PC-9 (cell line): ENCODE measurements at regions of chr16 and their contacts with region 1.

Region 1: DNA sequence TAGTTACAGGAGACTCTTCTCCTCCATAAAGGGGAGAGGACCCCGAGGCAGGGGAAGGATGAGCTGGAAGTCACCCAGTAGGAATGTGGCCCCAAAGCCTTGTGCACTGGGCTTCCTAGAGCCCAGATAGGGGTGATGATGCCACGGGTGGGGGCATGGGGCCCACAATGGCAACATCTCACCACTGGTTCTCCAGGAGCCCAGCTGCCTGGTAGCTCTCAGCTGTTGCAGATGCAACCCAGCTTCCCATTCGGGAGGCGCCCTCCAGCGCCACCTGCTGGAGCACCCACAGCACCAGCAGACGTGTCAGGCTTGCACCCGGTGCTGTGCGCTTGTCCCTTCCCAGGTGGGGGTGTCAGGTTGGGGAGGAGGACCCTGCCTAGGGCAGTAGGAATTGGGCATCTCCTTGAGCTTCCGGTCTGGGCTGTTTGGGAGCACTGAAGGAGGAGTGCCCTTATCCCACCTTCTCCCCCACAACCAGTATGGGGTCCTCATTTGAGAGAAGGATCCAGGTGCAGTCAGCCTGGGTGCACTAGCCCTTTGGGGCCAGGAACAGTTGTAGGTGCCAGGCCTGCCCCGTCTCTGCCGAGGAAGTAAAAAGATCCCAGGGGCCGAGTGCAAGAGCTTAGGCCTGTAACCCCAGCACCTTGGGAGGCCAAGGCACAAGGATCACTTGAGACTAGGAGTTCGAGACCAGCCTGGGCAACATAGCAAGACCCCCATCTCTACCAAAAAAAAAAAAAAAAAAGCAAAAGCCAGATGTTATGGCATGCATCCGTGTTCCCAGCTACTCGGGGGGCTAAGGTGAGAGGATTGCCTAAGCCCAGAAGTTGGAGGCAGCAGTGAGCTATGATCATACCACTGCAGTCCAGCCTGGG is 14.4 kb downstream of the CDIPT start:
- DNase-seq: peak in 1 of 2 experiments; percentile 75
- H3K4me3 ChIP-seq: no peak overlapping the region
- H3K27ac ChIP-seq: no peak overlapping the region
- H3K4me1 ChIP-seq: no peaks in the 10 kb centered on the region
- H3K27me3 ChIP-seq: no peaks in the 10 kb centered on the region
- CTCF ChIP-seq: peak; percentile 90

Region 2: GRCh38 chr16:30018731-30019158 is 170.1 kb after region 1 on chr16:
- CTCF ChIA-PET with region 1: interaction called, 12 read pairs
- POLR2A ChIA-PET with region 1: no interaction called
- intact Hi-C with region 1: no loop called
- DNase-seq: peak in 1 of 2 experiments; percentile 89
- H3K4me3 ChIP-seq: no peak overlapping the region
- H3K27ac ChIP-seq: no peak overlapping the region
- H3K4me1 ChIP-seq: no peaks in the 10 kb centered on the region; the same call in 1 of the 2 replicates
- H3K27me3 ChIP-seq: peaks cover 8% of the 10 kb centered on the region; the same call in 1 of the 2 replicates
- CTCF ChIP-seq: no peak